Vagina (tissue), 2 donors: ENCODE measurements at regions of chr4 and their contacts with region 1.

Region 1: GRCh38 chr4:57119054-57119651 is 9.0 kb upstream of the IGFBP7 start:
- DNase-seq: no peak
- H3K4me3 ChIP-seq: peak overlapping the region; percentile 19 to 32
- H3K27ac ChIP-seq: peak overlapping the region; percentile 71
- H3K4me1 ChIP-seq: peaks cover 20% of the 10 kb centered on the region
- H3K27me3 ChIP-seq: no peaks in the 10 kb centered on the region
- CTCF ChIP-seq: no peak
- POLR2A ChIP-seq: no peak

Region 2: DNA sequence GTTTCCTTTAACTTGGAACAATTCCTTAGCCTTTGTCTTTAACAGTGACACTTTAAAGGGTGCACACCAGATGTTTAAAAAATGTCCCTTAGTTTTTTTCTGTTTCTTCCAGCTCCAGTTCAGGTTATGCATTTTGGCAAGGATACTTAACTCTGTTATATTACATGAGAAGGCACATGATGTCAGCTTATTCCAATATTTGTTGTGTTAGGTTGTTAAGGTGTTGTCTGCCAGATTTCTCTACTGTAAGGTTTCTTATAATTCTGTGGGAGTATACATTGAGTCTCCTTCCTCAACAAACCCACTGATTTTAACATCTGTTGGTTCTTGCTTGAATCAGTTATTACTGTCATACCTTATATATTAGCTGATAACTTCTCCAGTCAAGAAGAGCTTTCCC is 178.2 kb before region 1 on chr4:
- intact Hi-C with region 1: no loop called
- DNase-seq: no peak
- H3K4me3 ChIP-seq: no peak overlapping the region
- H3K27ac ChIP-seq: no peak overlapping the region
- H3K4me1 ChIP-seq: no peaks in the 10 kb centered on the region
- H3K27me3 ChIP-seq: no peaks in the 10 kb centered on the region
- CTCF ChIP-seq: no peak
- POLR2A ChIP-seq: no peak

Region 3: GRCh38 chr4:57043347-57044251 is 75.6 kb before region 1 on chr4:
- intact Hi-C with region 1: loop called (anchors 5 kb)
- DNase-seq: no peak
- H3K4me3 ChIP-seq: no peak overlapping the region
- H3K27ac ChIP-seq: peak overlapping the region; percentile 83
- H3K4me1 ChIP-seq: peaks cover 35% of the 10 kb centered on the region
- H3K27me3 ChIP-seq: no peaks in the 10 kb centered on the region
- CTCF ChIP-seq: no peak
- POLR2A ChIP-seq: no peak

Region 4: DNA sequence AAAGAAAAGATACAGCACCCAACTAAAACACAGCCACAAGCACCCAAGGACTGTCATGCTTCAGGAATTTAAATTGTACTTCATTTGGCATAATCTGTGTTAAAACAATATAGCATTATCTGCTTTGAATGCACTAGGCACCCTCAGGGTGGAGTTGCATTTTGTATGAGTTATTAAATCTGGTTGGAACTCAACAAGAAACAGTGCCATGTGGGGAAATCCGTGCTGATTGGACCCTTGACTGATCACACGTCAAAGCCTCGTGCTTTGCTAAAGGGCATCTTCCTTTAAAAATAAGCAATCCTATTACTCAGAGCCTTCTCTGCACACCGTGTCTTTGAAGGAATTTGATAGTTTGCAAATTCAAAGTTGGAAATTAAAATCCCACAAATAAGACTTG is 44.4 kb before region 1 on chr4:
- intact Hi-C with region 1: no loop called
- DNase-seq: no peak
- H3K4me3 ChIP-seq: no peak overlapping the region
- H3K27ac ChIP-seq: peak overlapping the region; percentile 18
- H3K4me1 ChIP-seq: peaks cover 39% of the 10 kb centered on the region
- H3K27me3 ChIP-seq: no peaks in the 10 kb centered on the region
- CTCF ChIP-seq: no peak
- POLR2A ChIP-seq: no peak

Region 5: DNA sequence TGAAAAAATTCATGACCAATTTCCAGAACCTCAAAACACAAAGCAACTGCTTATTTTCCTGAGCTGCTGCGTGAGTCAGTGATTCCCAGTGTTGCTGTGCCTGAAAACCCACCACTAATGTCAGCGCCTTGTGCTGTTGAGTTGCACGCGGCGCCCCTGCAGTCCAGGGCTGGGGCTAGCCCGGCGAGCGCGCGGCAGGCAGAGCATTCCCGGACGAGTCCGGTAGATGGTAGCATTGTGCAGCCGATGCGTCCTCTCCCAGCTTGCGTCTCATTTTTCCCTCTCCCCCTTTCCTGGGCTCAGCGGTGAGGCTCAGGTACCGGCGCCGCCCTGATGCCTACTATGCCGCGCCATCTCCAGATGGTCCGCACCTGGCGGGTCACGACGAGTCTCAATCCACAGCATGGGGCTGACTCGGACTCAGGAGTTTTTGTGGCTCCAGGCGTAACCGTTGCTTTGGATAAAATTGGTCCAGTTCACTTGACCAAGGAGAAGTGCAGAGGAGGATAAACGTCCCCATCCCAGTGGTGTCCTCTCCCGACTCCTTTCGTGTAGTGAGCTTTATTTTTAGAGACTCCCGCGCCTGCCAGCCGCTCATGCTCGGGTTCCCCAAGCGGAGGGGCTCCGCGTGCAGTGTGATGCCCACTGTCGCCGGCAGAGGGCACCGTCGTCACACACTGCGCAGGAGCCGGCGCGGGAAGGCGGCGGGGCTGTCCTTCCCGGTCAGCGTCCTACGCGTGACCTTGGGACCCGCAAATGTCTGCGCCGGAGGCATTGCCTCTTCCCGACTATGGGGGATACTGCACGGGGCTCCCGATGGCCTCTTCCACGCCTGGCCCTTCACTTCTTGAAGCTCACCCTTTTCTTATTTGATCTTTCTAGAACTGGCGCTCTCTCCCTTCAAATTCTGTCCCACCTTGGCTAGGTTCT is 44.6 kb after region 1 on chr4:
- intact Hi-C with region 1: no loop called
- DNase-seq: peak in 1 of 2 donors; percentile 84
- H3K4me3 ChIP-seq: peak overlapping the region; percentile 47 to 71
- H3K27ac ChIP-seq: peak overlapping the region; percentile 79
- H3K4me1 ChIP-seq: peaks cover 8% of the 10 kb centered on the region
- H3K27me3 ChIP-seq: no peaks in the 10 kb centered on the region
- CTCF ChIP-seq: peak; percentile 90 to 92 (median 91)
- POLR2A ChIP-seq: no peak